Posterior vena cava (tissue), 2 donors: ENCODE measurements at regions of chr17 and their contacts with region 1.

Region 1: DNA sequence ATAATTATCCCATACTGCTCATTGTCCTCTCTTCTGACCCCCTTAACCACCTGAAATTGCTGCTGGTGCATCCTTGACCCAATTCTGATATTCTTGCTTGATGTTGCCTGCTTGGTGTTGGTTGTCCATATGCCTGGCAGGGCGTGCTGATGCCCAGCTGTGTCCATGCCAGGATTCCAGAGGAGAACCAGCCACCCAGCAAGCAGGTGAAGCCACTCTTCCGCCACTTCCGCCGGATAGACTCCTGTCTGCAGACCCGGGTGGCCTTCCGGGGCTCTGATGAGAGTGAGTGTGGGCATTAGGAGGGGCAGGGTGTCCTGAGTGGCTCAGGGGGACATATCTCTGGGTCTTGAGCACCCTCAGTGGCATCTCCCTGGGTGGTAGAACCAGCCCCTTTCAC is 11.4 kb downstream of the RAPGEFL1 start:
- DNase-seq: no peak

Region 2: GRCh38 chr17:40209404-40210093 is 20.9 kb after region 1 on chr17:
- intact Hi-C with region 1: loop called in 1 of 2 experiments (anchors 1 kb)
- DNase-seq: no peak

Region 3: DNA sequence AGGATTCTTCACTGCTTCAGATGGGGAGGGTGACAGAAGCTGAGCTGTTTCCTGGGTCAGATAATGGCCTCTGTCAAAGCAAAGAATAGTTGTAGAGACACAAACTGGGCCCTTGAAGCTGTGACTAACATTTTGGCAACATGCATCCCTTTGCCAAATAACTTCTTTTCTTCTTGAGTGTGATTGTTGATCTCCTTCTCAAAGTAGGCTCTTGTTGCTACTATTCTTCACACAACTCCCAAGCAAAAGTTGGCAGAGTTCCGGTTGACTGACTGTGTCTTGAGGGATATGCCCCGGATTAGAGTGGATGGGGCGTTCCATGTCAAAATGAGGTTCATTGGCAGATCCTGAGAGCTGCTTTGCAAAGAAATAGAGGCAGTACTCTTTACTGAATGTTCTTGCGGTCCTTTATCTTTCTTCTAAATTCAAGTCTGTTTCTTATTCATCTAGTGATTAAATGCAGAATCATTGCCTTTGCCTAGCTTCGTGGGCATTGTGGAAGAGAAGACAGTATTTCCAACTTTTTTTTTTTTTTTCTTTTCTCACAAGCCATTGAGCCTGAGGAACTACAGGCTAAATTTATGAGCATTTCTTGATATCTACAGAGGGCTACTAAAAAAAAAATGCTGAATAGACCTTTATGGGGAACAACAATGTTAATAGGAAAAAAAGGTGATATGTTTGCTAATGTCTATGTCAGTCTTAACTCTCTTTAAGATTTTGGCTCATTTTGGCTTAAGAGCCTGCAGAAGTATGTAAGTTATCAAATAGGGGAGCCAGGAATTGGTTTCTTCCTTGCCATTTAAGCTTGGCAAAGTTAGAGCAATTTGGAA is 36.2 kb after region 1 on chr17:
- intact Hi-C with region 1: no loop called
- DNase-seq: no peak

Region 4: GRCh38 chr17:40247926-40248495 is 59.3 kb after region 1 on chr17:
- intact Hi-C with region 1: no loop called
- DNase-seq: no peak